ENCODE measurements at regions of chr11 and their contacts with region 1.

Region 1: GRCh38 chr11:5476184-5476819 is 12.2 kb upstream of the OR52D1 start:
- DNase-seq: peak; percentile 58
- H3K4me3 Mint-ChIP-seq: no peak overlapping the region
- H3K27ac Mint-ChIP-seq: no peak overlapping the region
- H3K4me1 Mint-ChIP-seq: no peaks in the 10 kb centered on the region
- H3K27me3 Mint-ChIP-seq: peaks cover 6% of the 10 kb centered on the region

Region 2: GRCh38 chr11:5808500-5809121 is 332.3 kb after region 1 on chr11 and contains the start of gene OR52N2:
- CTCF ChIA-PET with region 1: interaction called, 20 read pairs
- DNase-seq: peak; percentile 80
- H3K4me3 Mint-ChIP-seq: peak within 1 kb of the TSS; percentile 89
- H3K27ac Mint-ChIP-seq: no peak within 1 kb of the TSS
- H3K4me1 Mint-ChIP-seq: peaks cover 10% of the 10 kb centered on the region
- H3K27me3 Mint-ChIP-seq: peaks cover 9% of the 10 kb centered on the region